HEK293 (cell line): ENCODE measurements at regions of chr6 and their contacts with region 1.

Region 1: DNA sequence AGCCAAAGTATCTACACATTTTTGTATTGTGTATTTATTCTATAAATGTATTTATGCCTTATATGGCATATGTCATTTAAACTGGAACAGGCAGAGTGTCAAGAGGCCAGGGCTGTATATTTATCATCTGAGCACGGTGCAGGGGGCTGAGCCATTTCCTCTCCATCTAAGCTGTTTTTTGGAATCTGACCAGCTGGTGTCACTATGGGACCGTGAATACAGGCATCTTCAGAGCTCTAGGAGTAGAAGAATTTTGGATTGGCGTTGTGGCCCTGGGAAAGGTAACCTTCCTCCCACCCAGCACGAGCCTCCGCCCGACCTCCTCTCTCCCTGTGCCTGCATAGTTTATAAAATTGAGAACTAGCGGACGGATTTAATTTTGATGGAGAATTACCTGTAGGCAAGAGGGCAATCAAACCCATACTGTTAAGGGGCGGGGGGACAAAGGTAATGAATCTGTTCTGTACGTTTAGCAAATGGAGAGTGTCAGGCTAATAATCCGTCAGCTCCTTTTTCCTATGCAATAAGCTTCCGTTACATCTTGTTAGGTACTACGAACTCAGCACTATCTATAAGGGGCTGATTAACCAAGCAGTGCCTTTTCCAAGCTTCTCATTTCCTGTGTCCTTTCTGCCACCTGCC is 29.0 kb upstream of the EEF1E1 start:
- H3K4me3 ChIP-seq: no peak overlapping the region
- H3K27ac ChIP-seq: no peak overlapping the region
- H3K4me1 ChIP-seq: no peaks in the 10 kb centered on the region
- CTCF ChIP-seq: peak; percentile 63

Region 2: DNA sequence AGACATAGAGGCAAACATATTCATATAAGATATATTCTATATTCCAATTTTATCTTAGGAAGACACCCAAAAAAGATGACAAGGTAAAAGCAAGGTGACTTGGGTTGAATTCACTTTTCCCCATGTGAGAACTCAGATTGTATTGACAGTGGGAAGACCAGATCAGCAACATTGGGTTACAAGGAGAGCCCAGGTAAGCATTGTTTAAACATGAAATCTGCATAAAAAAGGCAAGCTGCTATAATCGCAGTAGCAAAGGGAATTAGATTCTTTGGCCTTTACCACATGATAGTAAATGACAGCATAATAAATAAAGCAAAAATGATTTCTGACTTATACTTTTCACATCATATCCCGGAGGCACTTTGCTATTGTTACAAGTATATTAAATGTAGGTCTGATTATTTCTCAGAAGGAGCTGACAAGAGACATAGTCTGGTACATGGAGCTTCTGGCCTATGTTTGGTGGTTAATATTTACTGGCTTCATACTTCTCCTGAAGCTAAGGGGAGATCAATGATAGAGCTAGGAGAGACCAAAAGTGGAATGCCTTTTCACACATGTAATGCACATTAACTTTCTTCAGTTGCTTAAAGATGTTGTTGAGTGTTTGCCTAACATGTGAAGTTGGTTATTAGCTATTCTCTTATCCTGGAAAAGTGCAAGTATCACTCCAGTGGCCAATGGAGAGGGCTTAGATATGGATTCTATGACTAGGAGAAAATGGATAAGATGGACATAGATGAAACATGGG is 24.1 kb after region 1 on chr6:
- CTCF ChIA-PET with region 1: interaction called, 12 read pairs
- POLR2A ChIA-PET with region 1: no interaction called
- H3K4me3 ChIP-seq: no peak overlapping the region
- H3K27ac ChIP-seq: no peak overlapping the region
- H3K4me1 ChIP-seq: no peaks in the 10 kb centered on the region
- CTCF ChIP-seq: no peak

Region 3: DNA sequence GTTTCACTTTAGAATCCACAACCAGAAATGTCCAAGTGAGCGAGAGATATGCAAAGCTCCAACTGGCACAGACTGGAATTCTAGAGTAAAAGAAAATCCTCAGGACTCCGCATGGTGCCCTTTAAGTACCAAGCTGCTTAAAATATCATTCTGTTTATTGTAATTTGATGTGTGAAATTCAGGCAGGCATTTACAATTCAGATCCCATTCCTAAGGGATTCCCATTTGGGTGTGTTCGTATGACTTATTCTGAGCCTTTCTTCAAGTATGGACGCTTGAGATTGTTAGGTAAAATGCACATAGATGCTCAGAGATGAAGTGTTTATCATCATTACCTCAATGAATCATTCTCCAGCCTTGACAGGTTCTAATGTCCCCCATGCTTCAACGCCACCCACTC is 70.3 kb after region 1 on chr6:
- CTCF ChIA-PET with region 1: interaction called, 12 read pairs
- POLR2A ChIA-PET with region 1: no interaction called
- H3K4me3 ChIP-seq: no peak overlapping the region
- H3K27ac ChIP-seq: no peak overlapping the region
- H3K4me1 ChIP-seq: no peaks in the 10 kb centered on the region
- CTCF ChIP-seq: no peak

Region 4: GRCh38 chr6:8229915-8230756 is 98.8 kb after region 1 on chr6:
- CTCF ChIA-PET with region 1: interaction called, 15 read pairs
- POLR2A ChIA-PET with region 1: no interaction called
- H3K4me3 ChIP-seq: no peak overlapping the region
- H3K27ac ChIP-seq: no peak overlapping the region
- H3K4me1 ChIP-seq: no peaks in the 10 kb centered on the region
- CTCF ChIP-seq: no peak

Region 5: DNA sequence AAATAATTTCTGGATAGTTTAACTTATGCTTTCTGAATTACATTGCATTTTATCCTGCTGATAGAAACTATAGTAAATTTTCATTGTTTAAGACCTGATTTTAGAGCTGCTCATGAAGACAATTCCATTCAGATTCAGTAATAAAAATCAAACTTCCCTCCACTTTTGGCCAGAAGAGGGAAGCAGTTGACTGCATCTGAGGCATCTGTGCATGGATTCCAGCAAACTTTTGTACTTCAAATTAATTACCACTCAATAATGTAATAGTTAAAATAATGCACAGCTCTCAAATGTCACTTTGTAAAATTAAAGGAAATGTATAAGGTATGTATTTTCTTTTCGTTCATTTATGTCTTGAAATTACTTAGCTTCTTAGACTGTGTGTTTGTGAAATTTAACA is 368.2 kb after region 1 on chr6:
- CTCF ChIA-PET with region 1: interaction called, 13 read pairs
- POLR2A ChIA-PET with region 1: no interaction called
- H3K4me3 ChIP-seq: no peak overlapping the region
- H3K27ac ChIP-seq: no peak overlapping the region
- H3K4me1 ChIP-seq: no peaks in the 10 kb centered on the region
- CTCF ChIP-seq: no peak